SK-N-SH (cell line): ENCODE measurements at regions of chr1 and their contacts with region 1.

Region 1: GRCh38 chr1:211133836-211134669 is at the start of gene KCNH1:
- DNase-seq: peak; percentile 96
- H3K4me3 ChIP-seq: peak within 1 kb of the TSS; percentile 61 to 72
- H3K27ac ChIP-seq: peak within 1 kb of the TSS in 1 of 2 experiments; percentile 68; a peak in 2 of 4 replicates
- H3K4me1 ChIP-seq: peaks cover 0 to 13% of the 10 kb centered on the region in 2 experiments; a peak in 2 of 4 replicates
- H3K27me3 ChIP-seq: peaks cover 27% of the 10 kb centered on the region
- CTCF ChIP-seq: peak; percentile 95
- EP300 ChIP-seq: no peak; a peak in 2 of 4 replicates
- RAD21 ChIP-seq: peak; percentile 95
- polyA plus RNA-seq, gene KCNH1: 0.08 and 0.26 TPM in 2 replicates

Region 2: DNA sequence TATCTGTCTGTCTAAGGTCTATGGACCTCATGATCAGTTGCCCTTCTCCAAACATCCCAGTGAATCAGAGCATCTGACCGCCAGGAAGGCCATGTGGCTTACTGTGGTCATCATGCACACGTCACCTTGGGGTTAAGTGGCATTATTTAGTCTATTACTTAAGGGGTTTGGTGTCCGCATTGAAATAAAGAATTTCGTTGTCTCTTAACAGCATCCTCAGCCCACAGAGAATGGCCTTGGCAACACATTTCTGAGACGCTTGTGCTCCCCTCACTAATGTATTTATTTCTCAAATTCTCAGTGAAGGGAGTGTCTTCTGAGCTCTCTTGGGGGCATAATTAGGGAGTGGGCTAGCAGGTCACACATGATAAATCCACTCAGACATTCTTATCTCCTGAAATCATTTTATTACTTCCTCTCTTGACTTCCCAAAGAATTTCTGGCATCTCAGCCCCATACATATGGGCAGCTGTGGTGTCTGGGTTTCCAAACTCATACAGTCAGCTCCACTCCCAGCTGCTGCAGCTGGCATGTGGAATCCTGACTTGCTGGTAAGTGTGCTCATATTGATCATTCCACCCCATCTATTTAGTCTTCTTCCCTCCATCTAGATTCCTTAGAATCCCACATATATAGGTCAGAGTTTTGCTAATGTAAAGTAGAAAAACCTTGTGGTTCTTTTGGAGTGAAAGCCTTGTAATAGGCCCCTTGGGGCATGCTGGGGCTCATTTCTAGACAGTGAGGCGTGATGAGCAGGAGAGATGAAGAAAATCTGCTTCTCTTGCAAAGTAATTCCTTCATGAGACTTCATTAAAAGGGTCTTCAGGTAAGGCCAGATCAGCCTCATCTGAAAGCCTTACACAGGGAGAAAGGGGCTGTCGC is 694.9 kb before region 1 on chr1:
- CTCF ChIA-PET with region 1: interaction called, 22 read pairs
- POLR2A ChIA-PET with region 1: no interaction called
- DNase-seq: no peak
- H3K4me3 ChIP-seq: no peak overlapping the region
- H3K27ac ChIP-seq: peak overlapping the region; percentile 61 to 78
- H3K4me1 ChIP-seq: peaks cover 13 to 19% of the 10 kb centered on the region in 2 experiments; a peak in 3 of 4 replicates
- H3K27me3 ChIP-seq: no peaks in the 10 kb centered on the region
- CTCF ChIP-seq: no peak
- EP300 ChIP-seq: peak in 1 of 2 experiments; percentile 87; a peak in 2 of 4 replicates
- RAD21 ChIP-seq: no peak

Region 3: GRCh38 chr1:210536254-210536961 is 597.6 kb before region 1 on chr1:
- CTCF ChIA-PET with region 1: interaction called, 23 read pairs
- POLR2A ChIA-PET with region 1: no interaction called
- DNase-seq: peak; percentile 48
- H3K4me3 ChIP-seq: no peak overlapping the region; a peak in 1 of 4 replicates
- H3K27ac ChIP-seq: peak overlapping the region in 1 of 2 experiments; percentile 86; a peak in 2 of 4 replicates
- H3K4me1 ChIP-seq: peaks cover 0 to 48% of the 10 kb centered on the region in 2 experiments; a peak in 2 of 4 replicates
- H3K27me3 ChIP-seq: no peaks in the 10 kb centered on the region
- CTCF ChIP-seq: no peak
- EP300 ChIP-seq: peak in 1 of 2 experiments; percentile 76; a peak in 2 of 4 replicates
- RAD21 ChIP-seq: no peak; the same call in 1 of the 2 replicates

Region 4: GRCh38 chr1:210650403-210650802 is 483.6 kb before region 1 on chr1:
- CTCF ChIA-PET with region 1: interaction called, 18 read pairs
- POLR2A ChIA-PET with region 1: no interaction called
- DNase-seq: no peak
- H3K4me3 ChIP-seq: no peak overlapping the region
- H3K27ac ChIP-seq: no peak overlapping the region
- H3K4me1 ChIP-seq: peaks cover 9 to 18% of the 10 kb centered on the region in 2 experiments; a peak in 3 of 4 replicates
- H3K27me3 ChIP-seq: no peaks in the 10 kb centered on the region
- CTCF ChIP-seq: no peak
- EP300 ChIP-seq: no peak
- RAD21 ChIP-seq: no peak

Region 5: DNA sequence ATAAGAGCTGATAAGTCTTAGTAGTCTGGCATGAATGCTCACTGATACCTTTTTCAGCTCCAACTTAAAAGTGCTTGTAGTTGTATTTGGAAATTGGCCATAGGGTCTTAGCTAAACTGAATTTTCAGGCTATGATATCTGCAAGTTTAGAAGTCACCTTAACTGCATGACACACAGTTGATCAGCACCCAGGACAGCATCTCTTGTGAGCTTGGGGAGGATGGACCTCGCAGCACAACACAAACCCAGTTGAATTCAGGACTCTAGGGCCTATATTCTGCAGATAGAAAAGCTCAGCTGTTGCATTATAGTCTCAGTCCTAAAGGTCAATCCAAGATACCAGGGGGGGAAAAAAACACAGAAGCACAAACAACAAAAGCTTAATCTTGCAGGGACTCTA is 394.4 kb before region 1 on chr1:
- CTCF ChIA-PET with region 1: interaction called, 17 read pairs
- POLR2A ChIA-PET with region 1: no interaction called
- DNase-seq: no peak
- H3K4me3 ChIP-seq: no peak overlapping the region
- H3K27ac ChIP-seq: no peak overlapping the region
- H3K4me1 ChIP-seq: peaks cover 0 to 9% of the 10 kb centered on the region in 2 experiments; a peak in 1 of 4 replicates
- H3K27me3 ChIP-seq: no peaks in the 10 kb centered on the region
- CTCF ChIP-seq: no peak
- EP300 ChIP-seq: no peak
- RAD21 ChIP-seq: no peak

Region 6: GRCh38 chr1:211158866-211159265 is 24.8 kb after region 1 on chr1:
- CTCF ChIA-PET with region 1: interaction called, 10 read pairs
- POLR2A ChIA-PET with region 1: no interaction called
- DNase-seq: no peak
- H3K4me3 ChIP-seq: no peak overlapping the region
- H3K27ac ChIP-seq: no peak overlapping the region
- H3K4me1 ChIP-seq: no peaks in the 10 kb centered on the region; a peak in 1 of 4 replicates
- H3K27me3 ChIP-seq: no peaks in the 10 kb centered on the region
- CTCF ChIP-seq: no peak
- EP300 ChIP-seq: no peak
- RAD21 ChIP-seq: no peak

Region 7: DNA sequence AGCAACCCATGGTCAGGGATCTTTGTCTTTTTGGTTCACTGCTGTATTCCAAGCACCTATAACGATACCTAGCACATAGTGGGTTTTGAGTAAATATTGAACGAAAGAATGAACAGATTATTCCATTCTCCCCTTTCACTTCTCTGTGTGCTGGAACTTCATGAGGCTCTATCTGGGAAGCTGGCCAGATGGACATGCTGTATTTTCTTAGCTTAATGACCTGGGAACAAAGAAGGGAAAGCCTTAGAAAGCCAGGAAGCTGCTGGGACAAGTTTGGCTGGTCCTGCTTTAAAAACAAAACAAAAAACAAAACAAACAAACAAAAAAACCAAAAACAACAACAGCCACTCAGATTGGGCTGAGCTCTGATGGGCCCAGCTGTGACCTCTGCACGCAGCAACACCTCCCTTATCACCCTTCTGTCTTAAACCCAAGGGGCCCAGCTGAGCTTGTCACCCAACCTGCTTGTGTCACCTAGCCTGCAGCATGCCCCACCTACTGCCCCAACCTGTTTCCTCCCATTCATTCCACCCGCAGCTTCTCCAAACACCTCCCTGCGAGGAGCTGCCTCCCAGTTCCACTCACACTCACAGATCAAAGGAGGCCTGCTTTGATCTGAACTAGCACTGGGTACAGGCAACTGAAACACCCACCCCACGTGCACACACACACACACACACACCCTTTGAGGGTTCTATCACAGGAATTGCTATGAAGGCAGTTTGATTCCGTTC is 407.8 kb after region 1 on chr1:
- CTCF ChIA-PET with region 1: no interaction called
- POLR2A ChIA-PET with region 1: no interaction called
- DNase-seq: no peak
- H3K4me3 ChIP-seq: no peak overlapping the region
- H3K27ac ChIP-seq: no peak overlapping the region
- H3K4me1 ChIP-seq: no peaks in the 10 kb centered on the region
- H3K27me3 ChIP-seq: no peaks in the 10 kb centered on the region
- CTCF ChIP-seq: no peak
- EP300 ChIP-seq: no peak
- RAD21 ChIP-seq: no peak